OCI-LY7 (cell line): ENCODE measurements at regions of chr2 and their contacts with region 1.

Region 1: DNA sequence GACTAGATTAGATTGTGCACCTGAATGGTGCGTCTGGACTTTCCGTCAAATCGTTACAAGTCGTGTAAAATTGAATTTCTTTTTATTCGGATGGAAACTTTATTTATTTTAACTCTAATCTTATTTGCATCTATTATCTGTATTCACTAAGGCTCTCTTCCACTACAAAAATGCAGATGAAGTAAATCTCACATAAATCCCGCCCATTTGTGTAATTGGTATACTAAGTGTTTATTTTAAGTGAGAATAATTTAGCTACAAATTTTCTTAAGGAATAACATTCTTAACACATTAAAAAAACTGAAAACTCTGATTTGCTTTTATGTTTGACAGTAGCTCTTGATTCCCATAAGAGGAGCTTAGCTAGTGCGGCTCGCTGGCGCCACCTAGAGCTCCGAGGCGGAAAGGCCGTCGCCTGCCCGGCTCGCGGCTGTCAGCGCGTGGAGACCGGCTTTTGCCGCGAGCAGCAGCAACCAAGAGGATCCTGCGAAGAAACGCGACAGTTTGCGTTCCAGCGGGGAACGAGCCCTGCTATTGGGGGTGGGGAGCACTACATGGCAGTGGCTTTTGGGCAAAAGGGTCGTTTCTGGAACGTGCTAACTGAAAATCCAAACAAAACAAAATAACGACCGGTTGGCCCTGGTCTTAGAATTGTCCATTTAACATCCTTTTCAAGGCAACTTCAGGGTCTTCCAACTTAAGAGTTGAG is 6.7 kb downstream of the SP9 start:
- DNase-seq: peak; percentile 83
- H3K4me3 ChIP-seq: peak overlapping the region; percentile 49
- H3K27ac ChIP-seq: no peak overlapping the region
- H3K4me1 ChIP-seq: peaks cover 16% of the 10 kb centered on the region
- CTCF ChIP-seq: peak; percentile 99

Region 2: GRCh38 chr2:173027181-173028128 is 1314.0 kb before region 1 on chr2:
- CTCF ChIA-PET with region 1: no interaction called
- POLR2A ChIA-PET with region 1: no interaction called
- intact Hi-C with region 1: loop called (anchors 5 kb)
- DNase-seq: peak; percentile 85
- H3K4me3 ChIP-seq: no peak overlapping the region
- H3K27ac ChIP-seq: no peak overlapping the region
- H3K4me1 ChIP-seq: no peaks in the 10 kb centered on the region
- CTCF ChIP-seq: peak; percentile 99

Region 3: GRCh38 chr2:173749315-173749714 is 592.1 kb before region 1 on chr2:
- CTCF ChIA-PET with region 1: no interaction called
- POLR2A ChIA-PET with region 1: no interaction called
- intact Hi-C with region 1: loop called (anchors 5 kb)
- DNase-seq: no peak
- H3K4me3 ChIP-seq: no peak overlapping the region
- H3K27ac ChIP-seq: no peak overlapping the region
- H3K4me1 ChIP-seq: no peaks in the 10 kb centered on the region
- CTCF ChIP-seq: peak; percentile 25; the same call in 1 of the 2 replicates

Region 4: DNA sequence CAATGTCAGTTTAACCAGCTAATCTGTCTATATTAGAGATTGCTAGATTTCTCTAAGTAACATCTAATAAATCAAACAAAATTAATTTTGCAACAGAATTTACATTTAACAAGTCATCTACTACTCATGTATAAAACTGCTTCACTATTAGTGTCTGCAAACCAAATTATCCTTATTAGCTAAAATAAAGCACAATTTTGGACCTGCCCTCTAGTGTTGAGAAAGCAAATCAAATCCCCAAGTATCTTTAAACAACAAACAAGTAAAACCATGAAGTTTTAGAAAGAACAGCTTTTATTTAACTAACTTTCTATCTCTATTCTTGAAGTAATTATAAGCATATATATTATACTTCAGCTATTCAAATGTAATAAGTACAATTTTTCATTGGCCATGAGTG is 263.2 kb before region 1 on chr2:
- CTCF ChIA-PET with region 1: no interaction called
- POLR2A ChIA-PET with region 1: no interaction called
- intact Hi-C with region 1: loop called (anchors 10 kb)
- DNase-seq: no peak
- H3K4me3 ChIP-seq: no peak overlapping the region
- H3K27ac ChIP-seq: no peak overlapping the region
- H3K4me1 ChIP-seq: no peaks in the 10 kb centered on the region
- CTCF ChIP-seq: peak; percentile 80

Region 5: DNA sequence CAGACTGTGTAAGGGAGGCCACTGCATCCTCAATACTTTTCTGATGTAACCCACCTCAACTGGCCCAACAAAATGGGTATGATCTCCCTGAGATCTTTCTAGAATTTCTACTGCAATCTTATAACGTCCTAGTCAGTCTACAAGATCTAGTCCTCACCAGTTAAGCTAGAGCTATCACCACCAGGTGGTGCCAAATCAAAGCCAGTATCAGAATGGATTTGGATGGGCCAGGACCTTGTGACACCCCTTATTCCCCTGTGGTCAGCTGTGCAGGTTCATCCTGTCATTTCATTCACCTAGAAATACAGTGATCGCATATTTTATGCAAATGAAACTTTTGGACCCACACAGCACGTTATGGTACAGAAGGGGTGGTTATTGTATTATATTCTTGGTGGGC is 183.4 kb before region 1 on chr2:
- CTCF ChIA-PET with region 1: no interaction called
- POLR2A ChIA-PET with region 1: no interaction called
- intact Hi-C with region 1: loop called (anchors 1 kb)
- DNase-seq: peak; percentile 54
- H3K4me3 ChIP-seq: no peak overlapping the region
- H3K27ac ChIP-seq: no peak overlapping the region
- H3K4me1 ChIP-seq: no peaks in the 10 kb centered on the region
- CTCF ChIP-seq: peak; percentile 84